Left ventricle myocardium inferior (tissue), 1 donor: ENCODE measurements at regions of chr12 and their contacts with region 1.

Region 1: DNA sequence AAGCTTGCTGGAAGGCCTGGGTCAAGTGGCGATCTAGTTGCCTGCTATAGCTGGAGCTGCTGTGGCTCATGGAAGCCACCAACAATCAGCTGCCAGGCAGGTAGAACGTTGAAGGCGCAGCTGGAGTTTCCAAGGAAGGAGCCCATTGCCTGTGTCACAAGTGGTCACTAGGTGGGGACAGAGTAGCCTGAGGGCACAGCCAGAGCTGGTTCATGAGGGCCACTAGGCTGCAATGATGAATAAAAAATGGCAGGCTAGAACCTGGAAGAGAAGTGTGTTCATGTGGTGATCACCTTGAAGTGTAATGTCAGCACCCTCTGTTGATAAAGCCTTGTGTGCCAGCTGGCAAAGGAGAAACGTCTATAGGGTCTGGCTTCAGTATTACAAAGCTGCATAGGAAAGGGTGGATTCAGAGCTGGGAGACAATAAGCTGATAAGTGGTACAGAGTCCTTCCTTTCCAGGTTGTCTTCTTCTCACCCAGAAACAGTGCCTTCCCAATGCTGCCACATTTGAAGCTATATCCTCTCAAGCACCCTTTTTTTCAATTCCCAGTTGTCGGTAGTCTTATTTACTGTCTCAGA is 165.8 kb downstream of the EMP1 start:
- DNase-seq: peak; percentile 37
- H3K4me3 ChIP-seq: no peak overlapping the region
- H3K27ac ChIP-seq: no peak overlapping the region
- H3K4me1 ChIP-seq: no peaks in the 10 kb centered on the region
- H3K27me3 ChIP-seq: peaks cover 92% of the 10 kb centered on the region
- CTCF ChIP-seq: peak; percentile 87

Region 2: DNA sequence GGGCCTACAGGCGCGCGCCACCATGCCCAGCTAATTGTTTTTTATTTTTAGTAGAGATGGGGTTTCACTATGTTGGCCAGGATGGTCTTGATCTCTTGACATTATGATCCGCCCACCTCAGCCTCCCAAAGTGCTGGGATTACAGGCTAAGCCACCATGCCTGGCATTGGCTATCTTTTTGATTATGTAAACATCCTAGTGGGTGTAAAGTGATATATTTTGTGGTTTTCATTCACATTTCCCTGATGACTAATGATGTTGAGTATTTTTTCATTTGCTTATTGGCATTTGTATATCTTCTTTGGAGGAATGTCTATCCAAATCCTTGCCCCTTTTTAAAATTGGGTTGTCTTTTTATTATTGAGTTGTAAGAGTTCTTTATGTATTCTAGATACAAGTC is 734.3 kb before region 1 on chr12:
- intact Hi-C with region 1: no loop called
- DNase-seq: no peak
- H3K4me3 ChIP-seq: no peak overlapping the region
- H3K27ac ChIP-seq: no peak overlapping the region
- H3K4me1 ChIP-seq: peaks cover 17% of the 10 kb centered on the region
- H3K27me3 ChIP-seq: no peaks in the 10 kb centered on the region
- CTCF ChIP-seq: no peak

Region 3: DNA sequence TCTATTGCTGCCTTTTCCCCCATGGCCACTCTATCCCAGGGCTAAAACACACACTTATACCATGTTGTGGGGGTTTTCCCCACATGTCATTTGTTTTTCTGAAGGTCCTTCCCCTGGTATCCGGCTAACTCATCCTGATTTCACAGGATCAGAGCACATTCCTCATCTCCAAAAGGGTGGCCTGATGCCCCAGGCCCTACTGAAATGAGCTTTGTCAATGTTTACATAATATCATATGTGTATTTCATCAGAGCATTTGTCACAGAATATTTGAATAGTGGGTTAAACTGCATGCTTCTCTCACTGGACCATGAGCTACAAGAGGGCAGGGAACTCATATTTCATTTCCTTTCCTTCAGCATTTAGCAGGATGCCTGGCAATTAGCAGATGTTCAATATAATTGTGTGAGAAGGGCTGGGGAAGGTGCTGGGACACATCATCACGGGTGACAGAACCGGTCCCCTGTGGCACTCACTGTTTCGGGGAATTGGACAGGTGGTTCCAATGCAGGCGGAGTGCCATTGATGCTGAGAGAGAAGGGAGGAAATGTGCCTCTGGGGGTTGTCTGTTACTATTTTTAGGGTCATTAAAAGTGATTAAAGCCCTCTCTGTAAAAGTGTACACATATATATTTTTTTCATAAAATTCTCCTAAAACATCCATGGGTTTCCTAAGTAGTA is 139.0 kb before region 1 on chr12:
- intact Hi-C with region 1: no loop called
- DNase-seq: no peak
- H3K4me3 ChIP-seq: no peak overlapping the region
- H3K27ac ChIP-seq: no peak overlapping the region
- H3K4me1 ChIP-seq: peaks cover 6% of the 10 kb centered on the region
- H3K27me3 ChIP-seq: no peaks in the 10 kb centered on the region
- CTCF ChIP-seq: no peak

Region 4: GRCh38 chr12:13534645-13535398 is 172.5 kb after region 1 on chr12:
- intact Hi-C with region 1: loop called (anchors 10 kb)
- DNase-seq: peak; percentile 68
- H3K4me3 ChIP-seq: peak overlapping the region; percentile 42
- H3K27ac ChIP-seq: peak overlapping the region; percentile 38
- H3K4me1 ChIP-seq: peaks cover 3% of the 10 kb centered on the region
- H3K27me3 ChIP-seq: peaks cover 74% of the 10 kb centered on the region
- CTCF ChIP-seq: peak; percentile 90

Region 5: DNA sequence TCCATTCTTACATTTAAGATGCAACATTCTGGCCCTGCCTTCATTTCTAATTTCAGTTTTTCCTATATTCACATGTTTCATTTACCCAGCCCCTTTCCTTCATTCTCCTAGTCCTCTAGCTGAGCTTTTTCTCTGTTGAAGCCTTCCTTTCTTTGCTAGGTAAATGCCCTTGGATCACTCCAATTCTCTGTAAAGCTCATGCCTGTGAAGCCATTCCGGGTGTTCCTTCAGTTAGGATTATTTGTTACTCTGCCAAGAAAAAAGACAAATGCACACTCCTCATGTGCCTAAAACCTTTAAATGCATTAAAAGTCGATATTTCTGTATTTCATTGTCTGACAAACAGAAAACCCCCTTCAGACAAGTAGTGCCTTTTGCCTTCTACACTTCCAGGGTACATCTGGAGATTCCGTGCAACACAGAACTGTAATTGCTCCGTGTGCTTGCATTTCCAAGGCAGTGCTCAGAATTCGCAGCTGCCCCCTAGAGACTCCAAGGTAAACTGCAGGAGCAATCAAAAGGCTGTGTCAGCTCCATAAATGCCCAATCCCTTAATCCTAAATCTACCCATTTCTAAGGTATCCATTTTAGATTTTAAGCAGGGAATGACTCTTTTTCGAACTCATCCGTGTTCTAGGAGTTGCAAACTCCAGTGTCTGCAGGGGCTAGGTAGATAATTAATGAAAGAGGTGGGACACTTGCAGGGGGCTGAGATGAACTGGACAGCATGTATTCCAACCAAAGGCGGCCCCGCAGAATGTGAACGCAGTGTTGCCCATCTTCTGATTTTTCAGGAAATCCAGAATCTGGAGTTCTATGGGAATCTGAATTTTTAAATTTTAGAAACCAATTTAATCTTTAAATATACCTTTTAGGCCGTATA is 298.9 kb after region 1 on chr12:
- intact Hi-C with region 1: loop called (anchors 10 kb)
- DNase-seq: no peak
- H3K4me3 ChIP-seq: no peak overlapping the region
- H3K27ac ChIP-seq: no peak overlapping the region
- H3K4me1 ChIP-seq: no peaks in the 10 kb centered on the region
- H3K27me3 ChIP-seq: peaks cover 51% of the 10 kb centered on the region
- CTCF ChIP-seq: peak; percentile 89